Activated CD4-positive, alpha-beta T cell treated with anti-CD3 and anti-CD28 coated beads, Interleukin-2, amount 10 ng/mL, durations not matched to agents 24 days and 14 days (primary cell): ENCODE measurements at regions of chr14 and their contacts with region 1.

Region 1: GRCh38 chr14:69673578-69674305 is 62.3 kb downstream of the SUSD6 start:
- DNase-seq: peak; percentile 72
- H3K4me3 Mint-ChIP-seq: peak overlapping the region; percentile 80
- H3K27ac Mint-ChIP-seq: peak overlapping the region; percentile 98
- H3K4me1 Mint-ChIP-seq: peaks cover 83% of the 10 kb centered on the region
- H3K27me3 Mint-ChIP-seq: no peaks in the 10 kb centered on the region

Region 2: DNA sequence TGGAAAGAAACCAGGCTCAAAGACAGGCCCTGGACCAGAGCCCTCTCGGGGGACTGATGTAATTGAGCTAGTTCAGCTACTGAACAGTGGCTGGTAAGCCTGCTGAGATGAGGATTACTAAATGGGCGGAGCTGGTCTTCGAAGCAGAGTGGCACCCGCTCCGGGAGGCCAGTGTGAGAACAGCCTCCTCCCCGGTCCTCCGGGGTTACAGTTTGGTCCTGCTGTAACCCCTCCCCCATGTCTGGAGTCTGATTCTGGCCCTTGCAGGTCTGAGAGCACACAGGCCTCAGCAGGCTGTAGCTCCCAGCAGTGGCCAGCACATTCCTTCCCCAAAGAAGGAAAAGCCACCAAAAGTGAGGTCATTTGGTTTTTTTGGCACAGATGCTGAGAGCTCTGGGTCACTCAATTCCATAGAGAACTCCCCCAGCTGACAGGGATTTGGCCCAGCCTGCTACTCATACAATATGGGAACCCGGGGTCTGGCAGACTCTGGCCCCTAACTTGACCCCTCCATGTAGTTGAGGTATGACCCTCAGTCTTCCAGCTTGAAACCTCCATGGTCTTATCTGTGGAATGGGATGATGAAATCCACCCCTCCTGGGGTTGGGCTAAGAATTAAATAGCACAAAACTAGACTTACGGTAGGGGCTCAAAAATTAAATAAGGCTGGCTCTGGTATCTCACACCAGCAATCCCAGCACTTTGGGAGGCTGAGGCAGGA is 733.7 kb before region 1 on chr14:
- intact Hi-C with region 1: no loop called
- DNase-seq: no peak
- H3K4me3 Mint-ChIP-seq: no peak overlapping the region
- H3K27ac Mint-ChIP-seq: no peak overlapping the region
- H3K4me1 Mint-ChIP-seq: peaks cover 8% of the 10 kb centered on the region
- H3K27me3 Mint-ChIP-seq: no peaks in the 10 kb centered on the region

Region 3: GRCh38 chr14:69408331-69408960 is 265.3 kb before region 1 on chr14:
- intact Hi-C with region 1: no loop called
- DNase-seq: no peak
- H3K4me3 Mint-ChIP-seq: no peak overlapping the region
- H3K27ac Mint-ChIP-seq: no peak overlapping the region
- H3K4me1 Mint-ChIP-seq: peaks cover 5% of the 10 kb centered on the region
- H3K27me3 Mint-ChIP-seq: no peaks in the 10 kb centered on the region

Region 4: DNA sequence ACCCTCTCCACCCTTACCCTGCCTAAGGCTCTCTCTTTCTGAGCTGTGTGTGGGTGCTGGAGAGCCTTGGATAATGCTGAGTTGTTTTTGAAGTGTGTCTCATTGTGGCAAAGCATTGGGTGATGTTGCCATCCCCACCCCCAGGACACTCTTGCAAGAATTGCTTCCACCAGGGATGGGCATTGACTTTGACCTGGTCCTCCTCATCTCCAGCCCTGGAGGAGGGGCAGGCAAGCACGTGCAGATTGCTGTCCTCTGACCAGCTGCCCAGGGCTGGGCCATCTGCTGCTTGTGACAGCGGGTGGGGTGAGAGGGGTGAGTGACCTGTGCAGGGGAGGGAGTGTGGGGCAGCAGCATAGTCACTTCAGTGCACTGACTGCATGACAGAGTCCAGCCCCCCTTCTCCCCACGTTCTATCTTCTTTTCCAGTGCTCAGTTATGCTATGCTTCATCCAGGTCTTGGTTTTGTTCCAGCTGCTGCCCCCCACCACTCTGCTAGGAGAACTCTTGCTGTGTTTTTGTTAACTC is 36.2 kb before region 1 on chr14:
- intact Hi-C with region 1: loop called (anchors 1 kb)
- DNase-seq: peak; percentile 64
- H3K4me3 Mint-ChIP-seq: peak overlapping the region; percentile 73
- H3K27ac Mint-ChIP-seq: peak overlapping the region; percentile 92
- H3K4me1 Mint-ChIP-seq: peaks cover 76% of the 10 kb centered on the region
- H3K27me3 Mint-ChIP-seq: no peaks in the 10 kb centered on the region

Region 5: DNA sequence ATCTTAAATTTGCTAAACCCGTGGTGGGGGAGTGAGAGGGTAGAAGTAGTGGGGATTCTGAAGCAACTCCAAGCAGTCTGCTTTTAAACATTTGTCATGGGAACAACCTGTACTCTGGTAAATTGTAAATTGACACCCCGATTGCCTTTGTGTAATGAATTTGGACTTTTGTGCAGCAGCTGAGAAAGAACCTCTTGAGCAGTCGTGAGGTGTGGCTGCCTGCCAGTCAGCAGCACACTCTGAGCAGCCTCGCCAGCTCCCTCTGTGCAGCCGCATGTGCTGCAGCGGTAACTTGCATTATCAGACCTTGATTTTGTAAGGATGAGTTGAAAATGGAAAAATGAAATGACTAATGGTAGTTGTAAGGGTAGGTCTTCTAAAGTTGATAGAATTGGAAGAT is 12.0 kb after region 1 on chr14:
- intact Hi-C with region 1: loop called (anchors 1 kb)
- DNase-seq: peak; percentile 79
- H3K4me3 Mint-ChIP-seq: peak overlapping the region; percentile 75
- H3K27ac Mint-ChIP-seq: peak overlapping the region; percentile 96
- H3K4me1 Mint-ChIP-seq: peaks cover 79% of the 10 kb centered on the region
- H3K27me3 Mint-ChIP-seq: no peaks in the 10 kb centered on the region

Region 6: DNA sequence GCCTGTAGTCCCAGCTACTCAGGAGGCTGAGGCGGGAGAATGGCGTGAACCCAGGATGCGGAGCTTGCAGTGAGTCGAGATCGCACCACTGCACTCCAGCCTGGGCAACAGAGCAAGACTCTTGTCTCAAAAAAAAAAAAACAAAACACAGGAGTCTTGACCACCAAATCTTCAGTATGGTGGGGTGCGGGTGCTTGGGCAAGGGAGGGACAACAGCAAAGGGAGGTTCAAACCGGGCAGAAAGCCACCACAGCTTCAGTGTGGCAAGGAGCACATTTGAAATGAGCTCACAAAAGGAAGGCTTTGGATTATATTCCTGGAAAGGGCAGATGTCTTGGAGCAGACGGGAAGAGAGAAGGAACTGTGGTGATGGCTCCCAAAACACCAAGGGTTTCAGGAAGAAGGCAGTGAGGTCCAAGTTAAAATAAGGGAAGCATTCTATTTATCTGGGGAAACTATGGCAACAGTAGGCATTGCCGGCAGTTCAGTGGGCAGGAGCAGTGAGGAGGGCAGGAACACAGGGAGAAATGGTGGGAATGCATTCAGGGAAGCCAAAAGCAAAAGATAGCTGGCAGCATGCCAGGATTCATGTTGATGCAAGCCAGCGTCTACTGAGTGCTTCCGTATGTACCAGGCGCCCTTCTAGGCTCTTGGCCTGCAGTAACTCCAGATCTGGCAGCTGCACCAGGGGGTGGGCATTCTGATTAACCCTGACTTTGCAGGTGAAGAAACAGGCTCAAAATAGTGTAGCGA is 42.2 kb after region 1 on chr14:
- intact Hi-C with region 1: loop called (anchors 1 kb)
- DNase-seq: peak; percentile 70
- H3K4me3 Mint-ChIP-seq: peak overlapping the region; percentile 65
- H3K27ac Mint-ChIP-seq: peak overlapping the region; percentile 88
- H3K4me1 Mint-ChIP-seq: peaks cover 73% of the 10 kb centered on the region
- H3K27me3 Mint-ChIP-seq: no peaks in the 10 kb centered on the region